PC-9 (cell line): ENCODE measurements at regions of chr16 and their contacts with region 1.

Region 1: GRCh38 chr16:71781741-71782140 is 26.9 kb downstream of the AP1G1 start:
- DNase-seq: peak in 1 of 2 experiments; percentile 72
- H3K4me3 ChIP-seq: no peak overlapping the region
- H3K27ac ChIP-seq: peak overlapping the region; percentile 54
- H3K4me1 ChIP-seq: peaks cover 19% of the 10 kb centered on the region
- H3K27me3 ChIP-seq: no peaks in the 10 kb centered on the region
- CTCF ChIP-seq: no peak

Region 2: DNA sequence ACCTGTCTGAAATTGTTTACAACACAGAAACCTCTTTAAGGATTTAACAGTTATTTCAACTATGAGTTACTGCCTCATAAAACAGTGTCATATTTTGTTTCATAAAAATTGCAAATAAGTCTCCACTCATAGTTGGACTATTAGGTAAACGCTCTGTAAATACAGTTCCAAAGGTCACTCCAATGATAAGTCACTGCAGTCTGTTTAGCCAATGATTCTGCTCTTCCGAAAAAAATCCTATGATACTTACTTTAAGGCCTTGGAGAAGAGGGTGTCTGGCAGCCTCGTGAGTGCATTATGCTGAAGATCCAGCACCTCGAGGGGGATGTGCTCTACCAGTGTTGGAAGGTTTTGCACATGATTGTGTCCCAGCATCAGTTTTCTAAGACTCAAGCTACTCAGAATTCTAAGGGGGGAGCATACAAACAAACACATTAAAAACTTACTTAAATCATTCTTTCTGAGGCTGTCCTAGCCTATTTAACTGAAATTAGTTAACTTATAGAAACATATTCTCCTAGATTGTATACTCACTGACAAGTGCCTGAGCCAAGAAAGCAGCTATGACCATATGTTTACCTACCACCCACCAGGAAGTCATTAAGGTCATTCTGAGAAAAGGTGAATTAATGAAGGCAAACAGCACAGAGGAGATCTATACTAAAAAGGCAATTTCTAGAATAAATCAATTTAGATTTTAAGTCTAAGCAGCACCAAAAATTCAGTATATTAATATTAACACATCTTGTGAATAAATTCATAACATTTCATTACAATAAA is 114.6 kb before region 1 on chr16:
- CTCF ChIA-PET with region 1: no interaction called
- POLR2A ChIA-PET with region 1: interaction called, 41 read pairs
- intact Hi-C with region 1: no loop called
- DNase-seq: no peak
- H3K4me3 ChIP-seq: no peak overlapping the region
- H3K27ac ChIP-seq: no peak overlapping the region
- H3K4me1 ChIP-seq: no peaks in the 10 kb centered on the region
- H3K27me3 ChIP-seq: no peaks in the 10 kb centered on the region
- CTCF ChIP-seq: no peak

Region 3: DNA sequence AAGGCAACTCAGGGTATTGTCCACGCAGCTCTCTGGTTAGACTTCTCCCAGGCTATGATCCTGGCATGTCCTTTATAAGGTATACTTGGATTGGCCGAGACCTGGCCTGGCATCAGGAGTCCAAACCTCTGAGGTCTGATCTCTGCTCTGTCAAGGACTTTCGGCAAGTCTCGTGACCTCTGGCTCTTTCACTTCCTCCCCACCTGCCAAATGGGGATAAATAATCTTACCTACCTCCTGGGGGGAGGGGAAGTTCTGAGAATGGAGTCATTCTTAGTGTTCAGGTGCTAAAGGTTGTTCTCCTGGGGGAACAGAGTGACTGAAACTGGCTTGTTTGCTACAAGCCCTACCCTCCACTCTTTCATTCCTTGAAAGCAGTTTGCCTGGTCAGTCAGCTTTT is 71.7 kb after region 1 on chr16:
- CTCF ChIA-PET with region 1: no interaction called
- POLR2A ChIA-PET with region 1: no interaction called
- intact Hi-C with region 1: no loop called
- DNase-seq: no peak
- H3K4me3 ChIP-seq: no peak overlapping the region
- H3K27ac ChIP-seq: no peak overlapping the region
- H3K4me1 ChIP-seq: no peaks in the 10 kb centered on the region
- H3K27me3 ChIP-seq: no peaks in the 10 kb centered on the region
- CTCF ChIP-seq: no peak

Region 4: DNA sequence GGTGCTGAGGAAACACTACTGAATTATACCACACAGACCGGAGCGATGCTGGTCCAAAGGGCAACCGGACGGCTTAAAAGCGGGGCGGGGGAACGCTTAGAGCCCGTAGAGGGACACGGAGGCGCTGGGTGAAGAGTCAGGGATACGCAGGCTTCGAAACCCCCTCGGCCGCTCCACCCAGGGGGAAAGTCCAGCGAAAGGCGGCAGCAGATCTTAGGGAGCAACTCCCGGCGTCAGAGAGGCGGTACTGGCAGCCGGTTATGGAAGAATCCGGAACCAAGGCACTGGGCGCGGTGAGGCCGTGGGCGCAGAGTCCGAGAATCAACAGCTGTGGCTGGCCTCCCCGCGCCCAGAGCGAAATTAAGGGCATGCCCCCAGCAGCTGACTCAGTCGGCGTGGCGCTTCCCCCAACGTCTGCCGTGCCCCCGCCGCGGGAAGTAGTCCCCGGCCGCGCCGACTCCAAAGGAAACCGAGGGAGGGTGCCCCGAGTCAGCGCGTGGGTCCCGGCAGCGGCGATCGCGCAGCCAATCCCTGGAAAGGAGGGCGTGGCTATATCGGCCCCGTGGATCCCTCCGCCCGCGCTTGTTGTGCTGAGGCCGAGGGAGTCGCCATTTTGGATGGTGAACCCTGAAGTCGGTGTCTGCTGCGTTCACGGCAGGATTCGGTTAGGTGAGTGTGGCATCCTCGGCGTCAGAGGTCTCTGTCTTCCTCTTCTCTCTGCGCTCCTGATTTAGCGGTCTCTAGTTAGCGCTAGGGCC is 113.4 kb after region 1 on chr16 and contains the start of gene IST1:
- CTCF ChIA-PET with region 1: interaction called, 10 read pairs
- POLR2A ChIA-PET with region 1: no interaction called
- intact Hi-C with region 1: no loop called
- DNase-seq: peak; percentile 89 to 96
- H3K4me3 ChIP-seq: peak within 1 kb of the TSS; percentile 100
- H3K27ac ChIP-seq: peak within 1 kb of the TSS; percentile 90
- H3K4me1 ChIP-seq: peaks cover 23% of the 10 kb centered on the region
- H3K27me3 ChIP-seq: no peaks in the 10 kb centered on the region
- CTCF ChIP-seq: no peak
- total RNA-seq, gene IST1: 177 and 204 TPM in 2 replicates

Region 5: DNA sequence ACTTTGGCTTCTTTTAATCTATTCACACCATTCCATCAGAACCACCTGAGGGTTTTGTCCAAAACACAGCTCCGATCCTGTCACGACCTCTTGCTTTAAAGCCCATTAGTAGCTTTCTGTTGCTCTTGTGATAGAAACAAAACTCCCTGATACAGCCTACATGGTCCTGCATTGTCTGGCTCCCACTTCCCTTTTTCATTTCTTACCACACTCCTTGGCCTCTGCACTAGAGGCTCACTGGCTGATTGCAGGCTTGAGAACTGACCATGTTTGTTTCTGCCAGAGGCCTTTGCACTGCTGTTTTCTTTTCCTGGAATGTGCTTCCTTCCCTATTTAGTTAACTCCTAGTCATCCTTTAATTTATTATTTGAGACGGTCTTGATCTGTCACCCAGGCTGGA is 137.3 kb after region 1 on chr16:
- CTCF ChIA-PET with region 1: no interaction called
- POLR2A ChIA-PET with region 1: no interaction called
- intact Hi-C with region 1: no loop called
- DNase-seq: no peak
- H3K4me3 ChIP-seq: no peak overlapping the region
- H3K27ac ChIP-seq: no peak overlapping the region
- H3K4me1 ChIP-seq: no peaks in the 10 kb centered on the region
- H3K27me3 ChIP-seq: no peaks in the 10 kb centered on the region
- CTCF ChIP-seq: no peak

Region 6: DNA sequence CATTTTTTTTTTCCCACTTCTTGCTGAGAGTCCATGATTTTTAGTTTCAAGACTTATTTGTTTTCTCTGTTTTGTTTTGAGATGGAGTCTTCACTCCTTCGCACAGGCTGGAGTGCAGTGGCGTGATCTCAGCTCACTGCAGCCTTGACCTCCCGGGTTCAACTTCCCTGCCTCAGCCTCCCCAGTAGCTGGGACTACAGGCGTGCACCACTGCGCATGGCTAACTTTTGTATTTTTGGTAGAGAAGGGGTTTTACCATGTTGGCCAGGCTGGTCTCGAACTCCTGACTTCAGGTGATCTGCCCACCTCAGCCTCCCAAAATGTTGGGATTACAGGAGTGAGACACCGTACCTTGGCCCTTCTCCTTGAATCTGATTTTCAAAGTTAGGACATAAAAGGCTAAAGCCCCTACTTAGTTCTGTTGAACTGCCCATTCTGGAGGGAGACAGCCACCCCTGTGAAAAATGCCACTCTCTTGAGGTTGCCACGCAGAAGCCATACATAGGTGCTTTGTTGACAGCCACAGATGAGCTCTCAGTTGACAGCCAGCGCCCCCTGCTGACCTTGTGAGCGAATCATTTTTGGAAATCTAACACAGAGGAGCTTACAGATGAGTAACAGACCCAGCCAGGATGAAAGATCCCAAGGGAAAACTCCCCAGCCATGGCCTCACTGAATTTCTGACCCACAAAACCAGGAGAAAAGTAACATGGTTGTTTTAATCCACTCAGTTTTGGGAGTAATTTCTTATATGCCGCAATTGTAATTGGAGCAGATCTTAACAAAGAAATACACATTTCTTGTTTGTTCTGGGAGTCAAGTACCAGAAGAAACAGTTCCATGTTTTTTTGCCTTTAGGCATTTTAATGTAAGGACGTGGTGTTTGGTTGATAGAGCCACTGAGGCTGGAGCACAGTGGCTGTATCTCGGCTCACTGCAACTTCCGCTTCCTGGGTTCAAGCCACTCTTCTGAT is 179.6 kb after region 1 on chr16:
- CTCF ChIA-PET with region 1: interaction called, 11 read pairs
- POLR2A ChIA-PET with region 1: no interaction called
- intact Hi-C with region 1: no loop called
- DNase-seq: peak; percentile 48 to 75
- H3K4me3 ChIP-seq: no peak overlapping the region
- H3K27ac ChIP-seq: no peak overlapping the region
- H3K4me1 ChIP-seq: no peaks in the 10 kb centered on the region
- H3K27me3 ChIP-seq: no peaks in the 10 kb centered on the region
- CTCF ChIP-seq: peak; percentile 89

Region 7: DNA sequence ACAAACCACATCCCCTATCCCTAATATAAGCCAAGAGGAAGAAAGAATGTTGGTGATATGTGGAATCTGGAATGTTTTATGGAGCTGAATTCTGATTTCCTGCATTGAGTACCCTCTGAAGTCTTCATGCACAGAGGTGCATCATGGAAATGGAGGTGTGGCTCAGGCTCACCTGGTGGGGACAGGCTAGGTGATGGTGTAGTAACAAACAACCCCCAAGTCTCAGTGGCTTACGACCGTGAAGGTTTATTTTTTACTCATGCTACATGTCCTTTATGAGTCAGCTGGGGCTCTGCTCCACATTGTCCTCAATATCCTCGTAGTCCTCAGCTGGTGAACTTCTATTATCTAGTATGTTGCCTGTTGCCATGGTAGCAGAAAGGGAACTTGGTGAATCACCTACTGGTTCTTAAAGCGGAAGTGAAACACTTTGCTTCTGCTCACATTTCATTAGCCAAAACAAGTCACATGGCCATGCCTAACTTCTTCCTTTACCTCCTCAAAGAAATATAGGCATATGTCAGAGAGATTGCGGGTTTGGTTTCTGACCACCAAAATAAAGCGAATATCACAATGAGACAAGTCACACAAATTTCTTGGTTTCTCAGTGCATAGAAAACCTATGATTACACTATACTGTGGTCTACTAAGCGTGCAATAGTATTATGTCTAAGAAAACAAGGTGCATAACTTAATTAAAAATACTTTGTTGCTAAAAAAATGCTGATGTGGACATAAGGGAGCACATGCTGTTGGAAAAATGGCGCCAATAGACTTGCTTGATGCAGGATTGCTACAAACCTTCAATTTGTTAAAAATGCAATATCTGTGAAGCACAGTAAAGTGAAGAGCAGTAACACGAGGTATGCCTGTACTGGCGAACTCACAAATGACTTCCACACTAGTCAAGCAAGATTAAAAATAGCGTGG is 390.6 kb after region 1 on chr16 and contains the start of gene PMFBP1:
- CTCF ChIA-PET with region 1: no interaction called
- POLR2A ChIA-PET with region 1: no interaction called
- intact Hi-C with region 1: no loop called
- DNase-seq: peak; percentile 0 to 77
- H3K4me3 ChIP-seq: no peak within 1 kb of the TSS
- H3K27ac ChIP-seq: no peak within 1 kb of the TSS
- H3K4me1 ChIP-seq: no peaks in the 10 kb centered on the region
- H3K27me3 ChIP-seq: peaks cover 42% of the 10 kb centered on the region
- CTCF ChIP-seq: no peak
- total RNA-seq, gene PMFBP1: 0.55 TPM in 1 of 2 replicates, not detected in the other